ENCODE measurements at regions of chr9 and their contacts with region 1.

Region 1: GRCh38 chr9:134778841-134779411 is 101.7 kb upstream of the FCN2 start:
- DNase-seq: peak; percentile 27 to 71
- H3K4me3 ChIP-seq: no peak overlapping the region
- H3K27ac ChIP-seq: peak overlapping the region in 1 of 2 donors; percentile 32
- H3K4me1 ChIP-seq: peaks cover 6 to 21% of the 10 kb centered on the region in 2 donors
- H3K27me3 ChIP-seq: peaks cover 0 to 3% of the 10 kb centered on the region in 2 donors
- CTCF ChIP-seq: peak in 2 of 3 donors; percentile 36 to 54
- POLR2A ChIP-seq: no peak

Region 2: DNA sequence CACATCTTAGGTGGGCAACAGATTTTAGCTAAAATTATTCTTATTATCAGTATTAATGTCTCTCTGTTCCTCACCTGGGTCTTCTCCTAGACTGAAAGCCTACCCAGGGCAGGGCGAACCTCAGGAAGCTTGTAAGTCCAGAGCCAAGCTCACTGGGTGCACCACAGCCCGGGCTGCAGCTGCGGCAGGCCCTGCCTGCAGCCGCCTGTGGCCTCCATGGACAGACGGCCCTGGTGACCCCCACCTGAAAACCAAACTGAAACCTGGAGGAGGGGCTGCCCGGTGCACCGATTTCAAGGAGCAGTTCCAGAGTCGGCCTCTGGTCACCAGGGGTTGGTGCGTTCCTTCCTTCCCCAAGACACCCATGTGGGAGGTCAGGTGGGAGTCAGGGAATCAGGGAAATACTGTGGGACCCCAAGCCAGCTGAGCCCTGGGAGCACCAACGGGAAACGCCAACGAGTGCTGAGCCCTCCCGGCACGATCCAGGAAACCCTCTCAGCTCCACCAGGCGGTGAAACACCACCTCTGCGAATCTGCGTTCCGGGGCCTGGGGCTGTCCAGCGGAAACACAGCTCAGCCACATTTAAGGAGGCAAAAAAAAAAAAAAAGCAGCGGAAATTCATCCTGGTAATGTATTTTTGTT is 632.0 kb after region 1 on chr9:
- intact Hi-C with region 1: loop called (anchors 10 kb)
- DNase-seq: no peak
- H3K4me3 ChIP-seq: no peak overlapping the region
- H3K27ac ChIP-seq: no peak overlapping the region
- H3K4me1 ChIP-seq: no peaks in the 10 kb centered on the region
- H3K27me3 ChIP-seq: peaks cover 0 to 13% of the 10 kb centered on the region in 2 donors
- CTCF ChIP-seq: no peak
- POLR2A ChIP-seq: no peak

Measured in breast epithelium (tissue), 4 donors.